Activated CD8-positive, alpha-beta T cell treated with anti-CD3 and anti-CD28 coated beads, Interleukin-2, amount 10 ng/mL, durations not matched to agents 7 days and 5 days (primary cell): ENCODE measurements at regions of chr5 and their contacts with region 1.

Region 1: GRCh38 chr5:157743163-157744050 is at the start of gene LSM11:
- DNase-seq: peak; percentile 91
- ATAC-seq: peak; percentile 94
- H3K4me3 Mint-ChIP-seq: peak within 1 kb of the TSS; percentile 88
- H3K27ac Mint-ChIP-seq: peak within 1 kb of the TSS; percentile 89
- H3K4me1 Mint-ChIP-seq: peaks cover 33% of the 10 kb centered on the region
- H3K27me3 Mint-ChIP-seq: no peaks in the 10 kb centered on the region
- total RNA-seq, gene LSM11: 5.7 to 5.8 TPM

Region 2: GRCh38 chr5:157335534-157336422 is 407.6 kb before region 1 on chr5:
- CTCF ChIA-PET with region 1: interaction called, 10 read pairs
- POLR2A ChIA-PET with region 1: no interaction called
- DNase-seq: no peak
- ATAC-seq: no peak
- H3K4me3 Mint-ChIP-seq: no peak overlapping the region
- H3K27ac Mint-ChIP-seq: no peak overlapping the region
- H3K4me1 Mint-ChIP-seq: peaks cover 2% of the 10 kb centered on the region
- H3K27me3 Mint-ChIP-seq: no peaks in the 10 kb centered on the region

Region 3: DNA sequence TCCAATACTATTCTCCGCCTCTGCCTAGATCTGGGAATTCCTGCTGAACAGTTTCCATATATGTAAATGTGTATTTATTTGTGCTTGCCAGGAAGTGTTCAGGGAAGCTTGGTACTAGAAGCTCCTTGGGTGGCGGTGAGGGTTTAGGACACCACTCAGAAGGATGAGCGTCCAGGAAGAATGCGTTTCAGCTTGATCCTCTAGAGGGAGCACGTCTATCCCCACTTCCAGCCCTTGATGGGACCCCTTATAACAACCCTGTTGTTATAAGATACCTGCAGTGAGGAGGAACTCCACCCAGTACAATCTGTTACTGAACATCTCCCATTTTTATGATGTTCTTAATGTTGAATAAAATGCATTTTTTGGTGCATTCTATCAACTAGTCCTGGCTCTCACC is 388.6 kb before region 1 on chr5:
- CTCF ChIA-PET with region 1: interaction called, 12 read pairs
- POLR2A ChIA-PET with region 1: no interaction called
- DNase-seq: no peak
- ATAC-seq: no peak
- H3K4me3 Mint-ChIP-seq: no peak overlapping the region
- H3K27ac Mint-ChIP-seq: peak overlapping the region; percentile 26
- H3K4me1 Mint-ChIP-seq: peaks cover 12% of the 10 kb centered on the region
- H3K27me3 Mint-ChIP-seq: no peaks in the 10 kb centered on the region

Region 4: GRCh38 chr5:157431544-157432200 is 311.7 kb before region 1 on chr5:
- CTCF ChIA-PET with region 1: interaction called, 57 read pairs
- POLR2A ChIA-PET with region 1: no interaction called
- DNase-seq: peak; percentile 58
- ATAC-seq: peak; percentile 91
- H3K4me3 Mint-ChIP-seq: no peak overlapping the region
- H3K27ac Mint-ChIP-seq: no peak overlapping the region
- H3K4me1 Mint-ChIP-seq: peaks cover 3% of the 10 kb centered on the region
- H3K27me3 Mint-ChIP-seq: peaks cover 42% of the 10 kb centered on the region

Region 5: GRCh38 chr5:157607371-157608161 is 135.8 kb before region 1 on chr5:
- CTCF ChIA-PET with region 1: interaction called, 10 read pairs
- POLR2A ChIA-PET with region 1: no interaction called
- DNase-seq: peak; percentile 86
- ATAC-seq: peak; percentile 79
- H3K4me3 Mint-ChIP-seq: peak overlapping the region; percentile 15
- H3K27ac Mint-ChIP-seq: peak overlapping the region; percentile 86
- H3K4me1 Mint-ChIP-seq: peaks cover 78% of the 10 kb centered on the region
- H3K27me3 Mint-ChIP-seq: no peaks in the 10 kb centered on the region

Region 6: GRCh38 chr5:157718519-157718918 is 24.9 kb before region 1 on chr5:
- CTCF ChIA-PET with region 1: interaction called, 41 read pairs
- POLR2A ChIA-PET with region 1: interaction called, 3 read pairs
- DNase-seq: peak; percentile 34
- ATAC-seq: peak; percentile 92
- H3K4me3 Mint-ChIP-seq: no peak overlapping the region
- H3K27ac Mint-ChIP-seq: peak overlapping the region; percentile 66
- H3K4me1 Mint-ChIP-seq: peaks cover 26% of the 10 kb centered on the region
- H3K27me3 Mint-ChIP-seq: peaks cover under 1% of the 10 kb centered on the region

Region 7: DNA sequence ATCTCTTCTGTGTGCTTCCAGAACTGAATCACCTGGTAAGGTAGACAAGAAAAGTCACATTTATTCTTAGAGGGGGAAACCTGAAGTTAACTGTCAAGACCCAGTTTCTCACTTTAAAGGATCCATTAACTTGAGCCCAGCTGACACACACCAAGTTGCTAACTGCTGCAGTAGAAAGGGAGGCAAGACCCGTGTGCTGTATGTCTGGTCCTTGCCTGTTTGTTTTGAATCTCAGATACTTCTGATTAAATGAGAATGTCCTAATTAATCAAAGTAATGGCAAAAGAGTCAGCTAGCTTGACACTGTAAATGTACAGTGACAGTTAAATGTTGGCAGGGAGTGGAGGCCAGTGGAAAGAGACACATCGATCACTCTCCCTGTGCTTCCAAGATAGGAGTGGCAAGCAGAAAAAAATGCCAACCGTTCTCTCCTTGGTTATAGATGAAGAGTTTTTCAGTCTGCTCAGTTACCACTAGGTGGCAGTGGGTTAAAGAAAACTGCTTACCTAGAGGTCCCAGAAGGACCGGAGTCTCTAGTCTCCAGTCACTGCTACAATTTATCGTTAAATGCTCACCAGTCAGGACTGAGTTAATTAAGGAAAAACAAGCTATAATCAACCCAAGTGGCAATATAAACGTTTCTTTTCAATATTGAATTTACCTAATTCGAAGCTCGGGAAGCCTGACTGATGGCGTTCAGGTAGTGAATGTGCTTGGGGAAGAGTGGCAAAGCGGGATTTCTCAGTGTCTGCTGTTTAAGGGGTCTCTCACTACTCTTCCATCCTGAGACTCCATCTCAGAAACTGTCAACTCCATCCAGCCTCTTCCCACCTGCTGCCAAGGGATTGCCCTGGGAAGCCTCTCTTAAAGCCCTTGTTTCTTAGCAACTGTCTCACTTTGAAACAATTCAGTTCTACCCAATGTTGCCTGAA is 18.5 kb after region 1 on chr5:
- CTCF ChIA-PET with region 1: interaction called, 41 read pairs
- POLR2A ChIA-PET with region 1: interaction called, 4 read pairs
- DNase-seq: peak; percentile 53
- ATAC-seq: peak; percentile 90
- H3K4me3 Mint-ChIP-seq: no peak overlapping the region
- H3K27ac Mint-ChIP-seq: no peak overlapping the region
- H3K4me1 Mint-ChIP-seq: no peaks in the 10 kb centered on the region
- H3K27me3 Mint-ChIP-seq: no peaks in the 10 kb centered on the region